Endothelial cell of umbilical vein (primary cell): ENCODE measurements at regions of chr2 and their contacts with region 1.

Region 1: DNA sequence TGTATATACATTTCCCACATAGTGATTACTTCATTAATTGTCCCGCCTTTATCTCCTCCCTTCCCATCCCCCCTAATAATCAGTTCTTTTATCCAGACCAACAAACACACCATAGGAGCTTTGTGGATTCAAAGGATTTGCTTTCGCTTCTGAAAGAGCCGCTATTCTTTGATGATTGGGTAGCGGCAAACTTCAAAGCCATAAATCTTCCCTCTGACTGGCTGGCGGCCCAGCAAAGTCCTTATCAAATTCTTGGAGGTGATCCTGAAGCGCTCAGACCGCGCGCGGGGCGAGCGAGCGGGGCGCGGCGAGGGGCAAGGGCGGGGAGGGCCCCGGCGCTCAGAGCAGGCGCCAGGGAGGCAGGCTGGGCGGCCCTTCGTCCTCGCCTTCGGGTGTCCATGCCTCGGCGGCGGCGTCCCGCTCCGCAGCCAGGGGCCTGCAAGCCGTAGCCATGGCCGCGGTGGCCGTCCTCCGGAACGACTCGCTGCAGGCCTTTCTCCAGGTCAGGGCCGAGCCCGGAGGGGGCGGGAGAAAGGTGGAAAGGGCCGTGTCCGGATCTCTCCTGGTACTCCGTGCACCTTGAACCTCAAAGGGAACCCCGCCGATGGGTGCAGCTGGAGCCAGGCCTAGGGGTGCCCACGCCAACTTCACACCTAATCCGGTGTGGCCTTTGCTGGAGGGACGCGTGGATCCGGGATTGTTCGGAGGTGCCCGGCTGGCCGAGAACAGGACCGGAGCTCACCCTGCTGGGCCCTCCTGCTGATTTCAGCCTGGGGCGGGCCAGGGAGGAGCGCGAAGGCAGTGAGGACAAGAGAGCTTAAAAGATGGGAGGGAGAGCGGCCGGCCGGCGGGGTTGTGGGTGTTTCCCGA is at the start of gene SP5:
- DNase-seq: peak; percentile 49
- H3K4me3 ChIP-seq: peak within 1 kb of the TSS; percentile 17 to 63 (median 30)
- H3K27ac ChIP-seq: no peak within 1 kb of the TSS
- H3K4me1 ChIP-seq: peaks cover 19% of the 10 kb centered on the region
- H3K27me3 ChIP-seq: peaks cover 67 to 97% of the 10 kb centered on the region in 2 experiments
- CTCF ChIP-seq: no peak
- POLR2A ChIP-seq: no peak
- total RNA-seq, gene SP5: not detected in 2 replicates

Region 2: GRCh38 chr2:170770606-170771420 is 55.5 kb after region 1 on chr2:
- CTCF ChIA-PET with region 1: interaction called, 3 read pairs
- POLR2A ChIA-PET with region 1: no interaction called
- dilution Hi-C with region 1: no loop called
- intact Hi-C with region 1: loop called (anchors 5 kb)
- DNase-seq: peak; percentile 6
- H3K4me3 ChIP-seq: peak overlapping the region; percentile 29 to 71 (median 49)
- H3K27ac ChIP-seq: no peak overlapping the region
- H3K4me1 ChIP-seq: peaks cover 6% of the 10 kb centered on the region
- H3K27me3 ChIP-seq: peaks cover 18 to 30% of the 10 kb centered on the region in 2 experiments
- CTCF ChIP-seq: no peak
- POLR2A ChIP-seq: no peak